Endothelial cell of umbilical vein (primary cell): ENCODE measurements at regions of chr2 and their contacts with region 1.

Region 1: DNA sequence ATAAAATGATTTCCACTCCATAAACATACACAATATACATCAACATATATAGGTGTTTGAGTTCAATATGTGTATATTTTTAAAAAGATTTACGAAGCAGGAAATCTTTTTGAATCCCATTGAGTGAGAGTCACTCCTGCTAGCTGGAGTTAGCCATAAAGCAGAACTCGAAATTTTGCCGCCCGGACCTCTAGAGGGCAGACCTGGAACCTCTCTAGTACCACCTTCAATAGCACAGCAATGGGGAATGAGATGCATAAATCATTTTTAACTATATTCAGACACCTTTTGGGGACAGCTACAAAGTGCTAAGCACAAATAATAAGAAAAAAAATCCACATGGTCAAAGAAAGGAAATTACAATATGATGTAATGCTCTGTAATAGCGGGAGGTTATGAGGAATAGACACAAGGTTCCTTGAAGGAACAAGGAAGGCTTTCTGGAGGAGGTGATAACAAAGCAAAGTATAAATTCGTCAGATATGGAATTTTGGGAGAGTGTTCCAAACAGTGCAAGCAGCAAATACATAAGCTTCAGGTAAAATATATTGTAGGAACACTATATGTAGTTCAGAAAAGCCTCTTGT is 533.4 kb downstream of the ERBB4 start:
- DNase-seq: peak; percentile 67
- H3K4me3 ChIP-seq: no peak overlapping the region
- H3K27ac ChIP-seq: no peak overlapping the region
- H3K4me1 ChIP-seq: no peaks in the 10 kb centered on the region
- H3K27me3 ChIP-seq: no peaks in the 10 kb centered on the region
- CTCF ChIP-seq: peak; percentile 52 to 69
- POLR2A ChIP-seq: no peak

Region 2: DNA sequence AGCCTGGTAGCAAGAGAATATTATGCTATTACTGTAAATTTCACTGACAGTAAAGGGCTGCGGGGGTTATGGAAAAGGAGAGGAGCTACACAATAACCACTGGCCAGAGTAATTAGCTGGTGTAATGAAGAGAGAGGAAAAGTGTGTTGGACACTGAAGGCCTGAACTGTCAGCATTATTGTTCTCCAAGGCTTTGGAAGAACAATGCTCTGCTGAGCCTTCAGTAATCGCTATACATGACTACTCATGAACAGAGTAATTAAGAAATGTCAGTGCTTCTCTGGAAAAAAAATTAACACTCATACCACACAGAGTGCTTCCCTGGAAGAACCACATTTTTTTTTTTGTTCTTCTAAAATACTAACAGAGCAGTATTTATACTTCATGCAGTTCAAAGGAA is 517.4 kb before region 1 on chr2:
- CTCF ChIA-PET with region 1: no interaction called
- POLR2A ChIA-PET with region 1: no interaction called
- dilution Hi-C with region 1: no loop called
- intact Hi-C with region 1: no loop called
- DNase-seq: no peak
- H3K4me3 ChIP-seq: no peak overlapping the region
- H3K27ac ChIP-seq: no peak overlapping the region
- H3K4me1 ChIP-seq: no peaks in the 10 kb centered on the region
- H3K27me3 ChIP-seq: no peaks in the 10 kb centered on the region
- CTCF ChIP-seq: no peak
- POLR2A ChIP-seq: no peak

Region 3: GRCh38 chr2:211745295-211746097 is 259.7 kb before region 1 on chr2:
- CTCF ChIA-PET with region 1: interaction called, 16 read pairs
- POLR2A ChIA-PET with region 1: no interaction called
- dilution Hi-C with region 1: no loop called
- intact Hi-C with region 1: loop called (anchors 10 kb)
- DNase-seq: peak; percentile 56
- H3K4me3 ChIP-seq: no peak overlapping the region
- H3K27ac ChIP-seq: no peak overlapping the region
- H3K4me1 ChIP-seq: peaks cover 3% of the 10 kb centered on the region
- H3K27me3 ChIP-seq: no peaks in the 10 kb centered on the region
- CTCF ChIP-seq: peak; percentile 80 to 82
- POLR2A ChIP-seq: no peak

Region 4: GRCh38 chr2:212015588-212015987 is 10.4 kb after region 1 on chr2:
- CTCF ChIA-PET with region 1: interaction called, 16 read pairs
- POLR2A ChIA-PET with region 1: no interaction called
- dilution Hi-C with region 1: no loop called
- intact Hi-C with region 1: no loop called
- DNase-seq: no peak
- H3K4me3 ChIP-seq: no peak overlapping the region
- H3K27ac ChIP-seq: no peak overlapping the region
- H3K4me1 ChIP-seq: no peaks in the 10 kb centered on the region
- H3K27me3 ChIP-seq: no peaks in the 10 kb centered on the region
- CTCF ChIP-seq: no peak
- POLR2A ChIP-seq: no peak

Region 5: GRCh38 chr2:212032032-212032431 is 26.9 kb after region 1 on chr2:
- CTCF ChIA-PET with region 1: interaction called, 19 read pairs
- POLR2A ChIA-PET with region 1: no interaction called
- dilution Hi-C with region 1: no loop called
- intact Hi-C with region 1: loop called (anchors 1 kb)
- DNase-seq: peak; percentile 53
- H3K4me3 ChIP-seq: no peak overlapping the region
- H3K27ac ChIP-seq: peak overlapping the region; percentile 82
- H3K4me1 ChIP-seq: peaks cover 61% of the 10 kb centered on the region
- H3K27me3 ChIP-seq: no peaks in the 10 kb centered on the region
- CTCF ChIP-seq: no peak
- POLR2A ChIP-seq: no peak

Region 6: DNA sequence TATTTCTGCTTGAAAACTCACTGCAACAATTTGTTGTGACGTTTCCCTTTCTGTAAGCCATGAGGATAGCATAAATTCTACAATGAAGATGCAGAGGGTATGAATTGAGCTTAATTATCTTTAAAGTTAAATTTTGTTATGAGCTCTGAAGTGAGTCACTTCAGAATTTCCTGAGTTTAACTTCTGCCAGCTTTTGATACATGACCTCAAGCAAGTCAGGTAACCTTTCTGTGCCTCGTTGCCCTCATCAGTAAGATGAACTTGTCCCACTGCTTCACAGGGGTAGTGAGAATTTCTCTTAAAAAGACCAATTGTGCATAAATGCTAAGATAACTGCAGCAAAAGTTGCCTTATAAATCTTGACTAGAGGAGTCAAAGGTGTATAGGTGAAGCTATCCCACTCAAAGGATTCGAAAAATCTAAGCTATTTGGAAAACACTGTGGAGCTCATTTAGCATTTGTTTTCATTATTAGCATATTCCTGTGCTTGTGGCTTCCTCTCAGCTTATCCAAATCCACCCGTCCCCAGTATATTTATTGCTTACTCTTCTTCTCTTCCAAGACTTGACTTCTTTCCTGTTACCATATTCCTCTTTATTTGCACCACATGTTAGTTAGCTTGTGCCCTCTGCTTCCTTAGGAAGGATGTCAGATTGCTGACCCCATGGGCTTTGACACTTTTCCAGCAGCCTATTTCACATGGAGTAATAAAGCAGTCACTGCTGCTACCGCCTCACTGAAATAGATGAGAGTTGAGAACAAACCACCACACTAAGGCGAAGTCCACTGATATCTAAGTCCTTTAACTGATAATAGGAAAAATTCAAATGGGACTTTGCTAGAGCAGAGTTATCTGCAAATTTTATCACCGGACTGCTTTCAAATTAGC is 104.9 kb after region 1 on chr2:
- CTCF ChIA-PET with region 1: interaction called, 17 read pairs
- POLR2A ChIA-PET with region 1: no interaction called
- dilution Hi-C with region 1: no loop called
- intact Hi-C with region 1: no loop called
- DNase-seq: peak; percentile 92
- H3K4me3 ChIP-seq: peak overlapping the region in 1 of 3 experiments; percentile 5
- H3K27ac ChIP-seq: peak overlapping the region; percentile 20
- H3K4me1 ChIP-seq: peaks cover 26% of the 10 kb centered on the region
- H3K27me3 ChIP-seq: no peaks in the 10 kb centered on the region
- CTCF ChIP-seq: no peak
- POLR2A ChIP-seq: no peak

Region 7: GRCh38 chr2:212177724-212178123 is 172.5 kb after region 1 on chr2:
- CTCF ChIA-PET with region 1: interaction called, 11 read pairs
- POLR2A ChIA-PET with region 1: no interaction called
- dilution Hi-C with region 1: no loop called
- intact Hi-C with region 1: no loop called
- DNase-seq: peak; percentile 13
- H3K4me3 ChIP-seq: no peak overlapping the region
- H3K27ac ChIP-seq: no peak overlapping the region
- H3K4me1 ChIP-seq: peaks cover 15% of the 10 kb centered on the region
- H3K27me3 ChIP-seq: no peaks in the 10 kb centered on the region
- CTCF ChIP-seq: no peak
- POLR2A ChIP-seq: no peak

Region 8: GRCh38 chr2:212520340-212520739 is 515.2 kb after region 1 on chr2:
- CTCF ChIA-PET with region 1: interaction called, 18 read pairs
- POLR2A ChIA-PET with region 1: no interaction called
- dilution Hi-C with region 1: no loop called
- intact Hi-C with region 1: no loop called
- DNase-seq: peak; percentile 13
- H3K4me3 ChIP-seq: no peak overlapping the region
- H3K27ac ChIP-seq: no peak overlapping the region
- H3K4me1 ChIP-seq: no peaks in the 10 kb centered on the region
- H3K27me3 ChIP-seq: no peaks in the 10 kb centered on the region
- CTCF ChIP-seq: no peak
- POLR2A ChIP-seq: no peak